ENCODE measurements at regions of chr19 and their contacts with region 1.

Region 1: DNA sequence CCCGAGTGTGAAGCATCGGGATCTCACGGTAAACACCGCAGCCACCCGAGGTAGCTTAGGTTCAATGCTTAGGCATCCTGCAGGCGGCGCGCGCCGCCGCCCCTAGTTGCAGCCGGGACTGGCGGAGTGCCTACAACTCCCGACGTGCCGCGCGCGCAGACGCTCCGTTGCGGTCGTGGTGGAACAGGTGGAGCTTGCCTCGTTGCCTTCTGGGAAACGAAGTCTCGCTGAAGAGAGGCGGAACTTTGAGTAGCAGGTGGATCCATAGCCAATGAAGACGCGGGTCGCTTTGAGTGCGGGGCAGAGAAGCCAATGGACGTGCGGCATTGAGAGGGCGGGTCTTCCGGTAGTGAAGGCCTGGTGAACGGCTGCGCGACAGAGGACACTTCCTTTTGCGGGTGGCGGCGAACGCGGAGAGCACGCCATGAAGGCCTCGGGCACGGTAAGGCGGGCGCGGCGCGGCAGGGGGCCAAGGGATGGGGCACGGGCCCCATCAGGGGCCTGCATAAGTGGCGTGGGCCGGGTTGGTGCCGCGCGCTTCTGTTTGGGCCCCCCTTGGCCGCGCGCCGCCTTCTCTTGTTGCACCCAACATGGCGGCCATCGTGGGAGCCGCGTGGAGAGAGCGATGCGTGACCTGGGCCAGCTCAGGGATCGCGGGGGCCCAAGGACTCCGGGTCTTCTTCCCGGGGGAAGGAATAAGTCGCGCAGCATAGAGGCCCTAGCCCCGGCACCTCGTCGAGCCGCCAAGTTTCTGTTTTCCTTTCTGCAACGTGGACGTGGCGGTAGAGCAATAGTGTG is at the start of gene RPL18A:
- DNase-seq: peak; percentile 98 to 100 (median 100)
- H3K4me3 ChIP-seq: peak within 1 kb of the TSS; percentile 63 to 100 (median 98)
- H3K27ac ChIP-seq: peak within 1 kb of the TSS in 58 of 59 donors; percentile 13 to 94 (median 83)
- H3K27me3 ChIP-seq: no peaks in the 10 kb centered on the region
- CTCF ChIP-seq: peak; percentile 7 to 98 (median 90)
- total RNA-seq, gene RPL18A: 322 to 603 (median 418) TPM

Region 2: DNA sequence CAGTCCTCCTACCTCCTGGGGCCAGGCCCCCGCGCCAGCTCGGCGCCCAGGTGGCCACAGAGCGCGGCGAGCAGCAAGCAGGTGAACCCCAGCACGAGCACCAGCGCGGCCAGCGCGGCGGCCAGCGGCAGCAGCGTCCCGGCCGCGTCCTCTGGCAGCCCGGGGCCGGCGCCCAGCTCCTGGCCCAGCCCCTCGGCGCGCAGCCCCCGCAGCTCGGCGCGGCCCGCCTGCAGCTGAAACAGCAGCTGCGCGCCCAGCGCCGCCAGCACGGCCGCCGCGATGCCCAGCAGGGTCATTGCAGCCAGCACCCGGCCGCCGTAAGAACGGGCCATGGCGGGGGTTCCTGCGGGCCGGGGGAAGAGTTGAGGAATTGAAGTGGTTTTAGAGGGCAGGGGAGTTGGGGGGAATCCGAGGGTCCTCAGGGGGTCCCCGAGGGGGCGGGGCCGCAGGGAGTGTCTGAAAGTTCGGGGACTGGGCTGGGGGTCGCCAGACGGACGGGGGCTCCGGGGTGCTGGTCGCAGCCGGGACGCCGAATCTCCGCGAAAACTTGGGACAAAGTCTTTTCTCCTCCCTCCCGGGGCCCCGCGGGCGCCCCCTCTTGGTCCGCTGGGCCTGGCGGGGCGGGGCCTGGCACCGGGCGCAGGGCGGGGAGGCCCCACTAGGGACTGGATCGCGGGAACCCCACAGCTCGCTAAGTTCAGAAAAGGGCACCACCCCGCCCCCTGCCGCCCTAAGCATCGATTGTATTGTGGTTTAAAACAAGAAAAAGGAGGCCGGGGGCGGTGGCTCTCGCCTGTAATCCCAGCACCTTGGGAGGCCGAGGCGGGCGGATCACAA is 411.4 kb before region 1 on chr19 and contains the start of gene TMEM221:
- intact Hi-C with region 1: loop called in 1 of 2 experiments (anchors 10 kb)
- DNase-seq: peak in 1 of 10 donors; percentile 56
- H3K4me3 ChIP-seq: peak within 1 kb of the TSS; percentile 23 to 67 (median 49)
- H3K27ac ChIP-seq: peak within 1 kb of the TSS in 8 of 59 donors; percentile 16 to 55 (median 36)
- H3K27me3 ChIP-seq: no peaks in the 10 kb centered on the region
- CTCF ChIP-seq: peak in 54 of 56 donors; percentile 15 to 66 (median 46)
- total RNA-seq, gene TMEM221: 1.2 to 7.2 (median 4.1) TPM

Region 3: DNA sequence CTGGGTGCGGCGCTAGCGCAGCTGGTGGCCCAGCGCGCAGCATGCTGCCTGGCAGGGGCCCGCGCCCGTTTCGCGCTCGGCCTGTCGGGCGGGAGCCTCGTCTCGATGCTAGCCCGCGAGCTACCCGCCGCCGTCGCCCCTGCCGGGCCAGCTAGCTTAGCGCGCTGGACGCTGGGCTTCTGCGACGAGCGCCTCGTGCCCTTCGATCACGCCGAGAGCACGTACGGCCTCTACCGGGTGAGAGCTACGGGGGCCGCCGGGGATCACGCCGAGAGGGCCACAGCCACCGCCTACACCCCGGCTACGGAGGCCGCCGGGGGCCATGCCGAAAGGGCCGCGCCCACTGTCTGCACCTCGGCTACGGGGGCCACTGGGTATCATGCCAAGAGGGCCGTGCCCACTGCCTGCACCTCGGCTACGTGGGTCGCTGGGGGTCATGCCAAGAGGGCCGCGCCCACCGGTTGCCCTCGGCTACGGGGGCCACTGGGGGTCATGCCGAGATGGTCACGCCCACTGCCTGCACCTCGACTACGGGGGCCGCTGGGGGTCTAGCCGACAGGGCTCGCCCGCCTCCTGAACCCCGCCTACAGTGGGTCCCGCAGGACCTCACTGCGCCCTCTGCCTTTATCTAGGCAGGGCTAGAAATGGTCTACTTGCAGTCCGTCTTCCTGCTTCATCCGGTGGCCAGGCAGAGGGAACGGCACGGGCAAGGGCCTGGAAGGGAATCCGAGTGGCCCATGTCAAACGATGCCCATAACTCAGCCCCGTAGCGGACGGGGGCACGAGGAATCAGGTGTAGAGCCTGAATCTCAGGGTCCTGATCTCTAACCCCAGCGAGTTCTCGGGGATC is 347.8 kb before region 1 on chr19:
- intact Hi-C with region 1: loop called in 1 of 2 experiments (anchors 5 kb)
- DNase-seq: peak; percentile 78 to 91 (median 84)
- H3K4me3 ChIP-seq: peak overlapping the region; percentile 65 to 100 (median 94)
- H3K27ac ChIP-seq: peak overlapping the region; percentile 96 to 100 (median 99)
- H3K27me3 ChIP-seq: no peaks in the 10 kb centered on the region
- CTCF ChIP-seq: peak in 55 of 56 donors; percentile 32 to 71 (median 58)

Region 4: DNA sequence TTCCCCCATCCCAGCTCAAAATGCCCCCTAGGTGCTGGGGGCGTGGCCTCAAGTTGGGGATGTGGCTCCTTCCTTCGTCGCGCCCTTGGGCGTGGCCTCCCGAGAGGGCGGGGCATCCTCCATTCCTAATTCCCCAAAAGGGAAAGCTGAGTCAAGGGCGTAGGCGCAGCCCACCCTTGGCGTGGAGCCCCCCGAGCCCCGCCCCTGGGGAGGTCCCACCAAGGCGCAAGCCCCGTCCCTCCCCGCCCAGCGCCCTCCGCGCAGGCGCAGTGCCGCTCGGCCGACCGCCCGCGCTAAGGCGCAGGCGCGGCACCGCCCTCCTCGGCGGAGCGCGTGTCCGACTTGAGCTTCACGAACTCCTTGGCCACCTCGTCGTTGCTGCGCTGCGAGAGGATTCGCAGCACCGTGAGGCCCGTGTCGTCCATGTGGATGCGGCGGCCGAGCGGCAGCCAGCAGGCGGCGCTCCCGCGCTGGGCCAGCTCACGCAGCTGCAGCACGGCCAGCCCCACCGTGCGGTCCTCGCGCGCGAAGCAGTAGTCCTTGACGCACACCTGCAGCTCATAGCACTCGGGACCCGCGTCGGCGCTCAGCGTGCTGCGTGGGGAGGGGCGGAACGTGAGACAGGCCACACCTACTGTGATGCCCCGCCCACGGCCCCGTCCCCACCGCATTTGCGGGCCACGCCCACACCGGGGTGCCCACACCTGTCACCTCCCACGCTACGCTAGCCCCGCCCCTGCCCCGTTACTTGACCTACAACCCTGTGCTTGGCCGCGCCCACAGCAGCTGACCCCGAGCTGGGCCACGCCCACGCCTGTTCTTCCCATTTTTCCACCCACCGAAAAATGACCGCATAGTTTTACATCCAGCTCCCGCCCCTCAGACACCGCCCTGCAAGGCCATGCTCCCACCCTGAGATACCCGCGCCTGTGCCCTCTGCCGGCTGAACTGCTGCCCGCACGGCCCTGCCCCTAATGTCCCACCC is 253.7 kb before region 1 on chr19:
- intact Hi-C with region 1: loop called in 1 of 2 experiments (anchors 10 kb)
- DNase-seq: peak; percentile 40 to 80 (median 61)
- H3K4me3 ChIP-seq: peak overlapping the region in 58 of 59 donors; percentile 10 to 62 (median 47)
- H3K27ac ChIP-seq: peak overlapping the region in 25 of 59 donors; percentile 3 to 72 (median 40)
- H3K27me3 ChIP-seq: peaks cover 0 to 23% (median 0%) of the 10 kb centered on the region in 45 donors
- CTCF ChIP-seq: peak; percentile 19 to 80 (median 61)

Region 5: DNA sequence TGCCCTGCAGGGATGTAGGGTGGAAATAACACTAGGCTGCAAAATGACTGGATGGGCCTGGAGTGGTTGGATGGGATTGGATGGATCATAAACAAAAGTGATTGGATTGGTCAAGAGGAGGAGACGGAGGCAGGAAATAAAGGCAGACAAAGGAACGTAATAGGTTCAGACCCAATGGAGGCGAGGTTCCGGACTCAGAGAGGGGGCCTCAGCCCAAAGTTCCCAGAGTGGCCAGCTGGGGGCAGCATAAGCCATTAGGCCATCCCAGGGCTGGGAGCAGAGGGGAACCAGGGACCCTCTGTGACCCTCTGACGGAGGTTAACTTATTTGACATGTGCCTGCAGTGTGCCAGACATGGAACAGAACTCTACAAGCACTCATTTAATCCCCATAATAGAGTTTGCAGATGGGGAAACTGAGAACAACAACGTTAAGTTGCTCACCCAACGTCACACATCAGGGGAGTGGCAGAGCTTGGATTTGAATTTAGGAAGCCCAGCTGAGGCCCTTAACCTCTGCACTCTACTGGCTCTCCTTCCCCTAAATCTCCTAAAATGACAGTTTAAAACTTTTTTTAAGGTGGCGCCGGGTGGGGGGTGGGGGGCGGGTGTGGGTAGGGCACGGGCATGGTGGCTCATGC is 155.8 kb before region 1 on chr19:
- intact Hi-C with region 1: loop called (anchors 2 to 5 kb)
- DNase-seq: peak in 7 of 10 donors; percentile 31 to 77 (median 68)
- H3K4me3 ChIP-seq: no peak overlapping the region
- H3K27ac ChIP-seq: no peak overlapping the region
- H3K27me3 ChIP-seq: peaks cover 0 to 6% (median 0%) of the 10 kb centered on the region in 45 donors
- CTCF ChIP-seq: peak; percentile 72 to 97 (median 92)

Region 6: DNA sequence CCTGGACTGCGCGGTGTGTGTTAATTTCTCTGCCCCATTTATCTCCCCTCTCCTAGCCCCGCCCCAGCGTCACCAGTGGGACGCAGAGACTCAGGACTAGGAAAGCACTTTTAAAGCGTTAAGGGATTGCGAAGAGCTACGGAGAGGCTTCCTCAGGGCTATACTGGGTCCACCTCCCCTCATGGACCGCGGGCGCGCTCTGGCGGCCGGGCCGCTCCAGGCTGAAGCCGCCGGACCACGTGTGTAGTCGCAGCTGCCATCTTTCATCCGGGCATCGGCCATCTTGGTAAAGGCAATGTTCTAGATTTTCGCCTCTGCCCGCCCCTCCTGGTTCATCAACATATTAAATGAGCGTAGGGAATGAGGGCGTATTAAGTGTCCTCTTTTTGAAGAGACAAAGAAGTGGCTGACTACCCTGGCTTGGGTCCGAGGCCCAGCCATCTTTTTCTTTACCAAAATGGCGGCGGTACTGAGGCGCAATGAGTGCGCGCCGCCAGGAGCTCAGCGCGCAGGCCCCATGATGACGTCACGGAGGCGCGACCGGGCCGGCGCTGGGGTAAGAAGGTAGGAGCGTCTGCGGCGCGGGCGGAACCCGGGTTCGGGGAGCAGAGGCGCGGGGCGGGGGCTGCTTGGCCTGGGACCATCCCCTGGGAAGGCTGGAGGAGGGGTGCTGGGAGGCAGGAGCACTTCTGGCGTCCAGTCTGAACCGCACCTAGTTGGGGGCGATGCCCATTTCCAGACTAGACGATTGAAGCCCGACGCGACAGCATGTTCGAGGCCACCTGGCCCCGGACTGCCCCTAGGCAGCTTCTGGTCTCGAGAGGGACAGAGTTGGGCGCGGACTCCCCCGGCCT is 73.0 kb after region 1 on chr19 and contains the start of gene CCDC124:
- intact Hi-C with region 1: loop called (anchors 1 kb)
- DNase-seq: peak; percentile 79 to 89 (median 84)
- H3K4me3 ChIP-seq: peak within 1 kb of the TSS; percentile 63 to 100 (median 93)
- H3K27ac ChIP-seq: peak within 1 kb of the TSS; percentile 88 to 100 (median 96)
- H3K27me3 ChIP-seq: no peaks in the 10 kb centered on the region
- CTCF ChIP-seq: peak; percentile 55 to 93 (median 80)
- total RNA-seq, gene CCDC124: 46.6 to 103 (median 70.3) TPM

Region 7: DNA sequence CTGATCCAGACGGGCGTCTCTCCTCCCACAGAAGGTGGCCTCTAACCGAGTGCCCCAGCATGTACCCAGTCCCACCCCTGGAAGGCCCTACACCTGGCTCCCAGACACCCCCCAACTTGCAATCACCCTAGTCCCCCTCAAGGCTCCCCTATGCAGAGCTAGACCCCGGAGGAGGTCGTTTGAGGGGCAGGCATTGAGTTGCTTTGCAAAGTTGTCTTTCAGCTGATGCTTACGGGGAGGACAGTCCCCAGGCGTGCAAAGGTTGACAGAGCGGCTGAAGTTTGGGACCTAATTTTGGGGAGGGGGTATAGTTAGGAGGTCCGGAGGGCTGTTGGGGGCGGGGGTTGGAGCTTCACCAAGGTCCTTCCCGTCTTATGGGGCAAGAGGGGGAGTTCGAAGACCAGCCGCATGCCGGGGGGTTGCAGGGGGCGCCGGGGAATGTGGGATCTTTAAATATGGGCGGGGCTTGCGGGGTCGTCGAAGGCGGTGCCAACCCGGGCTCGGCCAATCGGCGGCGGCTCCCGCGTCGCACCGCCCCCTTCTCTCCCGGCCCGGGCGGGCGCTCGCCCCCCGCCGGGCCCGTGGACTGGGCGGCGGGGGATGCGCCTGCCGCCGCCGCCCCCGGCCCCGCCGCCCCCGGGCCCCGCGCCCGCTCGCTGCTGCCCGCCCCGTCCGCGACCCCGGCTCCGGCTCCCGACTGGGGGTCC is 107.0 kb after region 1 on chr19 and contains the start of gene KCNN1:
- intact Hi-C with region 1: no loop called
- DNase-seq: peak in 3 of 10 donors; percentile 43 to 68 (median 49)
- H3K4me3 ChIP-seq: peak within 1 kb of the TSS; percentile 18 to 74 (median 61)
- H3K27ac ChIP-seq: peak within 1 kb of the TSS in 2 of 59 donors; percentile 28 to 48
- H3K27me3 ChIP-seq: peaks cover 0 to 28% (median 0%) of the 10 kb centered on the region in 45 donors
- CTCF ChIP-seq: no peak
- total RNA-seq, gene KCNN1: 21.3 to 177 (median 74.4) TPM

Region 8: GRCh38 chr19:17996826-17997316 is 137.1 kb after region 1 on chr19:
- intact Hi-C with region 1: loop called (anchors 2 to 10 kb)
- DNase-seq: peak; percentile 70 to 91 (median 86)
- H3K4me3 ChIP-seq: peak overlapping the region in 2 of 59 donors; percentile 2 to 13
- H3K27ac ChIP-seq: no peak overlapping the region
- H3K27me3 ChIP-seq: no peaks in the 10 kb centered on the region
- CTCF ChIP-seq: peak; percentile 69 to 100 (median 99)

Region 9: GRCh38 chr19:18160971-18161635 is 301.4 kb after region 1 on chr19:
- intact Hi-C with region 1: no loop called
- DNase-seq: peak in 6 of 10 donors; percentile 63 to 88 (median 68)
- H3K4me3 ChIP-seq: peak overlapping the region; percentile 22 to 67 (median 50)
- H3K27ac ChIP-seq: peak overlapping the region in 58 of 59 donors; percentile 29 to 95 (median 84)
- H3K27me3 ChIP-seq: no peaks in the 10 kb centered on the region
- CTCF ChIP-seq: peak in 53 of 56 donors; percentile 22 to 89 (median 62)

Measured in dorsolateral prefrontal cortex (tissue), 120 donors.